Activated naive CD4-positive, alpha-beta T cell treated with anti-CD3 and anti-CD28 coated beads for 36 hours (primary cell): ENCODE measurements at regions of chr9 and their contacts with region 1.

Region 1: DNA sequence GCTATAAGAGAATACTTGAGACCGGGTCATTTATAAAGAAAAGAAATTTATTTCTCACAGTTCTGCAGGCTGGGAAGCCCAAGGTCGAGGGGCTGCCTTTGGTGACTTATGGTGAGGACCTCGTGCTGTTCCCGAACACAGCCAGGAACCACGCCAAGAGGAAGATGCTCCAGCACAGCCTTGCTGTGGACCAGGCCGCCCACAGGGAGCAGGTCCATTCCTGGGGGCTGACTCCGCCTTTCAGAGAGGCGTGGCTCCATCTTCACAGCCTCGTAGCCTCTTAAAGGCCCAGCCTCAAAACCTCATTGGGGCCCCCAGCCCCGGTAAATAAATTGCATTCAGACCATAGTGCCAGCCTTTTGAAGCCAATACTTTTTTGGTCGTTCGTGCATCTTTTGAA is 93.5 kb upstream of the CACNA1B start:
- DNase-seq: no peak
- H3K4me3 Mint-ChIP-seq: no peak overlapping the region
- H3K27ac Mint-ChIP-seq: no peak overlapping the region
- H3K4me1 Mint-ChIP-seq: peaks cover 2% of the 10 kb centered on the region
- H3K27me3 Mint-ChIP-seq: no peaks in the 10 kb centered on the region

Region 2: DNA sequence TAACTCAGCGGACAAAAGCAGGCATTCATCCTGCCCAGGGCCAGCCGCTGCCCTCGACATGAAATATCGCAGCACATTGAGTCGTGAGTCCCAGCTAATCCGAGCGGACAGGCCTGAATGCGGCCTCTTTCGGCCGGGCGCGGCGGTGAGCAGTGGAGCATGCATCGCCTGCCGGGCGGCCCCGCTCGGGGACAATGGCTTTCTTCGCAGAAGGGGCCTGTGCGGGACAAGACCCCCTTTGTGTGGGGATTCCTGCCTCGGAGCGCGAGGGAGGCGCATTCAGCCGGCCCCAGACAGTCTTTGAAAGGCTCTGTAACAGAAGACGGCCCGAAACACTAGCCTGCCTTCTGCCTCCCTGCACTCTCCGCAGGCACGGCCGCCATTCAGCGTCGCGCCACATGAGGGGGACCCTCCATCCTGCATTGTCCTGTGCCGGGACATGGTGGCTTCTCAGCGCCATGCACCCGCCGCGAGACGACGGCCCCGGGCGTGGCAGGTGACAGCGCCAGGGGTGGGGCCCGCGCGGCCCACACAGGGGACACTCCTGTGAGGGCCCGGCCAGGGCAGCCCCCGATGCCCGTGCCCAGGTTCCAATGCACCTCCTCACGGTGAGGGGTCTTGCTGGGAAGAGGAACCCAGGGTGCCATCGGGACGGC is 413.1 kb before region 1 on chr9:
- CTCF ChIA-PET with region 1: no interaction called
- intact Hi-C with region 1: no loop called
- DNase-seq: no peak
- H3K4me3 Mint-ChIP-seq: no peak overlapping the region
- H3K27ac Mint-ChIP-seq: no peak overlapping the region
- H3K4me1 Mint-ChIP-seq: no peaks in the 10 kb centered on the region
- H3K27me3 Mint-ChIP-seq: no peaks in the 10 kb centered on the region

Region 3: DNA sequence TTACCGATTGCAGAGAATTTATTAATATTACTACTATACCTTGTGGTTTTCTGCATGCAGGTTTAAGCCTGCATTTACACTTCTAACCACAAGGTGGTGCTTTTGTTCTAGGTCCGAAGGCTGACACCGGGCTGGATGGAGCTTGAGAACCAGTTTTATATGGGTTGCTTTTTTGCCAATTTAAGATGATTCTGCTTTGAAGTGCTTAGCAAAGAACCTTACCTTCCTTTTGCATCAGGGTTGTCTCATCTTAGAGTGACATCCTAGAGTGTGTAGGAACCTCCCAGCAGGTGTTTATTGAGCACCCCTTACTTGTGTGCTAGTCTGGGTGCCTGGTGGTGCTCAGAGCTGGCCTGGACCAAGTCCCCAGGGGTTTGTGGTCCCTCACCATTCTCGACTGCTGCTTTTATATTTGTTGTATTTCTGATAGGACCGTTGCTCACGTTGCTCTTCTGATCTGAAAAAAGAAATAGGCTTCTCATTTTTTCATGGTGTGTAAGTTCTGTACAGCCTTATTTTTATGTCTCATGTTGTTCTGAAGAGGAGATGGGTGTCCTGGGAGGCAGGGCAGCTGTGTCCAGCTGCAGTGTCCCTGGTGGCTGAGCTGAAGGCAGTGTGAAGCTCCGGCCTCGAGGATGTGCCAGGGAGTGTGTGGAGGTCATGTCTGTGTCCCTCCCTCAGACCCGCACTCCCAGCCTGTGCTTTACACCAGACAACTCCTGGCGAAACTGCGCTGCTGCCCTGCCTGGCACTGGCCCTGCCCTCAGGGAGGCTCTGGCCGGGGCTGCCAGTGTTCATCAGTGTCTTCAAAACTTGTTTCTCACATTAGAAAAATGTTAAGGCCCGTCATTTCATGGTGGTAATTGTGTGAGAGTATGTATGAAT is 110.9 kb before region 1 on chr9:
- CTCF ChIA-PET with region 1: interaction called, 4 read pairs
- intact Hi-C with region 1: loop called (anchors 5 kb)
- DNase-seq: peak; percentile 64
- H3K4me3 Mint-ChIP-seq: no peak overlapping the region
- H3K27ac Mint-ChIP-seq: no peak overlapping the region
- H3K4me1 Mint-ChIP-seq: peaks cover 27% of the 10 kb centered on the region
- H3K27me3 Mint-ChIP-seq: no peaks in the 10 kb centered on the region

Region 4: DNA sequence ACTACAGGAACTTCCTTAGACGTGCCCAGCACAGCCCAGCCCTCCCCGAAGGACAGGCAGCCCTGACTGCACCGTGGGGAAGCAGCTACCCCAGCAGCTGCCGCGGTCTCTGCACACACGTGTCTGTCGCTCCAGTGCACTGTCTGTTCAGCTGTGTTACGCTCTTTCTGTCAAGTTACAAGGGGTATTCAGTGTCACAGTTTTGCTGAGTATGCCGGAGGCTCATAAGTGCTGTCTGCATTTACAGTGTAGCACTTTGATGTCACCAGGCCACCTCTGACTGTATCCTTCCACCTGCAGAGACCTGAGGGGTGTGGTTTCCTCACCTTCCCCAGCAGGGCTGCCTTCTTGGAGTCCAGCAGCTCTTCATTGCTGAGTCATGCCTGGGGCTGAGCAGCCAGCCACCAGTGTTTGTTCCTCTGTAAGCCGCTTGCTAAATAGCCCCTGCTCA is 38.5 kb before region 1 on chr9:
- CTCF ChIA-PET with region 1: no interaction called
- intact Hi-C with region 1: no loop called
- DNase-seq: peak; percentile 25
- H3K4me3 Mint-ChIP-seq: no peak overlapping the region
- H3K27ac Mint-ChIP-seq: no peak overlapping the region
- H3K4me1 Mint-ChIP-seq: peaks cover 14% of the 10 kb centered on the region
- H3K27me3 Mint-ChIP-seq: no peaks in the 10 kb centered on the region